Activated CD8-positive, alpha-beta T cell treated with anti-CD3 and anti-CD28 coated beads for 36 hours (primary cell): ENCODE measurements at regions of chr15 and their contacts with region 1.

Region 1: DNA sequence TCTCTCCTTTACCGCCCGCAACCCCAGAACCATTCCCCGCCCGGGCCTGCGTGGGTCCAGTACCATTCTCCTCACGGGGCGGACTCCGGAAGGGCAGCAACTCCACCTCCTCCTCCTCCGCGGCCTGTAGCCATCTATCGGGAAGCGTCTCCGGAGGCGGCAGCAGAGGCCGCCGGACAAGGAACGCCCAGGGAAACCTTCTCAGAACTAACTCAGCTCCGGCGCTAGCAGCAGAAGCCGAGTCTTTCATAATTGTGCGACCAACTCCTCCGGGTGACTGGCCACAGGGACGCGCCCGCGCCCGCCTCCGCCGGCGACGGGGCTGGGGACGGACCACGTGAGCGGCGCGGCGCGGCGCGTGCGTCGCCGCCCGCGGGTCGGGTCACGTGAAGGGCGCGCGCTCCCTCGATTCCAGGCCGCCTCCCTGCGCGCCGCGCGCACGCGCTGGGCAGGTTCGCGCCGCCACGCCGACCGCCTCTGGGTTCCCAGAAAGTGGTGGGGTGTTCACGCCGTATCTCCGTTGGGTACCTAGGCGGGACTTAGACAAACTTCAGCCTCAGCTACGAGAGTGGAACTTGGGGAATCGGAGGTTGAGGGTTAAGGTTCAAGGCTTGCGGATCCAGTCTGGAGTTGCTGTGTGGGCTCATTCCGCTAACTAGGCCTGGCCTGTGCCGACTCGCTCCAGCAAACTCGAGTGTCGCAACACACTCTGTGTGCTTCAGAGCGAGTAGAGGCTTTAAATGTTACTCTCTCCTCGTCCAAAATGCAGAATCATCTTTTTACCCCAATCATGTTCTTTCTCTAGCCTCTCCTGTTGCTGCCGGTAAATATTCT is at the start of gene TRPM7:
- DNase-seq: peak; percentile 91
- ATAC-seq: peak; percentile 78
- H3K4me3 Mint-ChIP-seq: peak within 1 kb of the TSS; percentile 89
- H3K27ac Mint-ChIP-seq: peak within 1 kb of the TSS; percentile 100
- H3K4me1 Mint-ChIP-seq: peaks cover 43% of the 10 kb centered on the region
- H3K27me3 Mint-ChIP-seq: no peaks in the 10 kb centered on the region
- CTCF ChIP-seq: no peak
- total RNA-seq, gene TRPM7: 38.2 to 38.8 TPM

Region 2: DNA sequence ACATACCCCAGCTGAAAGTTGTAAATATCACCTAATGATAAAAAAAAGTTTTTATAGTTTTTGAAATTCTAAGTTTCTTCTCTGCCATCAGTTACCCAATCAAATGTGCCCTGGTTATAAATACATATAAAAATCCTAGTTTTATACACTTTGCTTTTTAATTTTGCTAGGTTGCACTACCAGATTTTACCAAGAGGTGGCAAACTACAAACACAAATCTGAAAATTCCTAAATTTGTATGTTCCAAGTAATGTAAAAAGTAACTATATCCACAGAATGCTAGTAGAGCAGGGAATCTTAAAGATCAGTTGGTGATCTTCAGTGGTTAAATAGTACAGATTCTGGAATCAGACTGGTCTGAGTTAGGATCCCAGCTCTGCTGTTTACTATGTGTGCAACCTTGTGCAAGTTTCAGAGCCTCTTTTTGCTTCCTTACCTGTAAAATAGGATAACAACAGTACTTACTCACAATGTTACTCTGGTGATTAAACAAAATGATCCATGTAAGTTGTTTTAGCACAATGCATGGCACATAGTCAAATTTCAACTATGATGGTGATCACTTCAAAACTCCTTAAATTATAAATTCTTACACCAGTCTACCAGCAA is 11.0 kb before region 1 on chr15:
- CTCF ChIA-PET with region 1: interaction called, 10 read pairs
- POLR2A ChIA-PET with region 1: interaction called, 4 read pairs
- intact Hi-C with region 1: no loop called
- DNase-seq: no peak
- ATAC-seq: peak; percentile 27
- H3K4me3 Mint-ChIP-seq: no peak overlapping the region
- H3K27ac Mint-ChIP-seq: peak overlapping the region; percentile 46
- H3K4me1 Mint-ChIP-seq: peaks cover 26% of the 10 kb centered on the region
- H3K27me3 Mint-ChIP-seq: no peaks in the 10 kb centered on the region
- CTCF ChIP-seq: peak; percentile 98

Region 3: GRCh38 chr15:50765195-50765973 is 78.7 kb after region 1 on chr15 and contains the start of gene SPPL2A:
- CTCF ChIA-PET with region 1: interaction called, 3 read pairs
- POLR2A ChIA-PET with region 1: interaction called, 6 read pairs
- intact Hi-C with region 1: loop called (anchors 5 kb)
- DNase-seq: peak; percentile 93
- ATAC-seq: peak; percentile 90
- H3K4me3 Mint-ChIP-seq: peak within 1 kb of the TSS; percentile 88
- H3K27ac Mint-ChIP-seq: peak within 1 kb of the TSS; percentile 99
- H3K4me1 Mint-ChIP-seq: peaks cover 54% of the 10 kb centered on the region
- H3K27me3 Mint-ChIP-seq: no peaks in the 10 kb centered on the region
- CTCF ChIP-seq: no peak
- total RNA-seq, gene SPPL2A: 47.7 to 48.8 TPM

Region 4: DNA sequence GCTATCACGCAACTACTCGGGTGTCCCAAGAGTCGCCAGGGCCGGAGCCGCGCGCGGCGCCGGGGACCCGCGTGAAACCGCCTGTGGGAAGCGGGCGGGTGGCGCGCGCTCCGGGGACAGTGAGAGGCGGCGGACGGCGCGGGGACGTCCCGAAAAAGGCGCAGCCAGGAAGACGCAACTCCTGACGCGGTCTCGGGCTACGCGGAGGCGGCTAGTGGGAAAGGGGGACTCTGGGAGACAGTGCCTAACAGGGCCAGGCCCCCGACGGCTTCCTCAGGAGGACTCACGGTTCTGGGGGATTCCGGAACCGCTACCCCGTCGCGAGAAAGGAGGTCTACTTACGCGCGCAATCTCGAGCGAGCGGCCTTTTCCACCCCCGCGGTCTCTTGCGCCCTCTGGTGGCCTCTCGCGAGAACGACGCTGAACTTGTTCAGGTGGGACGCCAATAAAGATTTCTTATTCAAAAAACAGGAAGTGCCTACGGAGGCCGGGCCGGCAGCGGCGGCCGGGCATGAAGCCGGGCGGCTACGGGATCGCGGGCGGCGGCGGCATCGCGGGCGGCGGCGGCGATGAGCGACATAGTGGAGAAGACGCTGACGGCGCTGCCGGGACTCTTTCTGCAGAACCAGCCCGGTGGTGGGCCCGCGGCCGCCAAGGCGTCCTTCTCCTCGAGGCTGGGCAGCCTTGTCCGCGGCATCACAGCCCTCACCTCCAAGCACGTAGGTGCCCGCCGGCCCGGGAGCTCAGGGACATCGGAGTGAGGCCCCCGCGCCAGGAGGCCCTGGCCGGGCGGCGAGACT is 221.7 kb after region 1 on chr15 and contains the start of gene AP4E1:
- CTCF ChIA-PET with region 1: no interaction called
- POLR2A ChIA-PET with region 1: interaction called, 7 read pairs
- intact Hi-C with region 1: loop called (anchors 5 kb)
- DNase-seq: peak; percentile 94
- ATAC-seq: peak; percentile 67
- H3K4me3 Mint-ChIP-seq: peak within 1 kb of the TSS; percentile 81
- H3K27ac Mint-ChIP-seq: peak within 1 kb of the TSS; percentile 100
- H3K4me1 Mint-ChIP-seq: peaks cover 15% of the 10 kb centered on the region
- H3K27me3 Mint-ChIP-seq: no peaks in the 10 kb centered on the region
- CTCF ChIP-seq: peak; percentile 92
- total RNA-seq, gene AP4E1: 16.6 TPM